ENCODE measurements at regions of chr20 and their contacts with region 1.

Region 1: GRCh38 chr20:16761305-16761829 is 13.2 kb downstream of the OTOR start:
- DNase-seq: peak; percentile 13
- H3K4me3 Mint-ChIP-seq: no peak overlapping the region
- H3K27ac Mint-ChIP-seq: no peak overlapping the region
- H3K4me1 Mint-ChIP-seq: peaks cover 11% of the 10 kb centered on the region
- H3K27me3 Mint-ChIP-seq: peaks cover 19% of the 10 kb centered on the region
- CTCF ChIP-seq: no peak

Region 2: GRCh38 chr20:16517946-16518783 is 243.2 kb before region 1 on chr20:
- CTCF ChIA-PET with region 1: interaction called, 3 read pairs
- intact Hi-C with region 1: loop called (anchors 10 kb)
- DNase-seq: peak; percentile 16
- H3K4me3 Mint-ChIP-seq: no peak overlapping the region
- H3K27ac Mint-ChIP-seq: no peak overlapping the region
- H3K4me1 Mint-ChIP-seq: no peaks in the 10 kb centered on the region
- H3K27me3 Mint-ChIP-seq: no peaks in the 10 kb centered on the region
- CTCF ChIP-seq: no peak

Region 3: GRCh38 chr20:16701296-16701695 is 60.1 kb before region 1 on chr20:
- CTCF ChIA-PET with region 1: no interaction called
- intact Hi-C with region 1: loop called (anchors 1 kb)
- DNase-seq: no peak
- H3K4me3 Mint-ChIP-seq: no peak overlapping the region
- H3K27ac Mint-ChIP-seq: no peak overlapping the region
- H3K4me1 Mint-ChIP-seq: no peaks in the 10 kb centered on the region
- H3K27me3 Mint-ChIP-seq: no peaks in the 10 kb centered on the region
- CTCF ChIP-seq: no peak